Dorsolateral prefrontal cortex (tissue), 120 donors: ENCODE measurements at regions of chr7 and their contacts with region 1.

Region 1: DNA sequence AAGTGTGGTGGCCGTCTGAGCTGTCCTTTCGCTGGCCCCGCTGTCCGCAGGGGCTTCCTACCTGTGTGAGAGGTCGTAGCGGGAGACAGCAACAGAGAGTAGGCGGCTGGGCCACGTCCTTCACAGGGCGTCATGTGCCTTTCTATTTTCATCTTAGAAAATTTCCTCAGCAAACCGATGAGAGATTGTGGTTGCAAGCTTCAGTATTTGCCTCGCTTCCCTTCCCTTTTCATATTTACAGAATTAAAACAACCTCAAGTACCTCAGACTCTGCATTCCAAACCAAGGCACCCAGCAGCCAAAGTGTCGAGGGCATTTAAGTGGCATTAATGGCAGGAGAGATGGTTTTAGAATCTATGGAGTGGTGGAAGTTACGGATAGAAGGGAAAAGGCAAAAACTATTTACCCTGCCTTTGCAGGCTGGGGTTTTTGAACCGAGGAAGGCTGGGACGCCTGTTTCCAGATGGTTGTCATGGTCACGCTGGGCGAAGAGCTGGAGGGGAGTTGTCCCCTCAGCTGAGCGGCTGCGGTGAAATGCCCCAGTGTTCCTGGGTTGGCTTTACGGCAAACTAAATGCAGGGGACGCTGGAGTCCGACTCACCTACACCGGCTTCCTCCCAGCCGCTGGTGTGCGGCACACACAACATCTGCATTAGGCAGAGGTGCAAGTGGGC is 41.9 kb downstream of the WIPI2 start:
- DNase-seq: peak in 1 of 10 donors; percentile 38
- H3K4me3 ChIP-seq: no peak overlapping the region
- H3K27ac ChIP-seq: peak overlapping the region in 43 of 59 donors; percentile 2 to 70 (median 44)
- H3K27me3 ChIP-seq: no peaks in the 10 kb centered on the region
- CTCF ChIP-seq: no peak

Region 2: GRCh38 chr7:5197811-5198210 is 34.1 kb before region 1 on chr7:
- intact Hi-C with region 1: loop called in 1 of 2 experiments (anchors 5 kb)
- DNase-seq: peak in 2 of 10 donors; percentile 5 to 22
- H3K4me3 ChIP-seq: no peak overlapping the region
- H3K27ac ChIP-seq: no peak overlapping the region
- H3K27me3 ChIP-seq: no peaks in the 10 kb centered on the region
- CTCF ChIP-seq: no peak

Region 3: GRCh38 chr7:5677538-5678294 is 445.8 kb after region 1 on chr7:
- intact Hi-C with region 1: loop called in 1 of 2 experiments (anchors 10 kb)
- DNase-seq: peak; percentile 57 to 79 (median 72)
- H3K4me3 ChIP-seq: no peak overlapping the region
- H3K27ac ChIP-seq: peak overlapping the region in 41 of 59 donors; percentile 3 to 77 (median 39)
- H3K27me3 ChIP-seq: no peaks in the 10 kb centered on the region
- CTCF ChIP-seq: peak; percentile 42 to 87 (median 78)